Activated naive CD4-positive, alpha-beta T cell treated with anti-CD3 and anti-CD28 coated beads for 36 hours (primary cell): ENCODE measurements at regions of chr16 and their contacts with region 1.

Region 1: DNA sequence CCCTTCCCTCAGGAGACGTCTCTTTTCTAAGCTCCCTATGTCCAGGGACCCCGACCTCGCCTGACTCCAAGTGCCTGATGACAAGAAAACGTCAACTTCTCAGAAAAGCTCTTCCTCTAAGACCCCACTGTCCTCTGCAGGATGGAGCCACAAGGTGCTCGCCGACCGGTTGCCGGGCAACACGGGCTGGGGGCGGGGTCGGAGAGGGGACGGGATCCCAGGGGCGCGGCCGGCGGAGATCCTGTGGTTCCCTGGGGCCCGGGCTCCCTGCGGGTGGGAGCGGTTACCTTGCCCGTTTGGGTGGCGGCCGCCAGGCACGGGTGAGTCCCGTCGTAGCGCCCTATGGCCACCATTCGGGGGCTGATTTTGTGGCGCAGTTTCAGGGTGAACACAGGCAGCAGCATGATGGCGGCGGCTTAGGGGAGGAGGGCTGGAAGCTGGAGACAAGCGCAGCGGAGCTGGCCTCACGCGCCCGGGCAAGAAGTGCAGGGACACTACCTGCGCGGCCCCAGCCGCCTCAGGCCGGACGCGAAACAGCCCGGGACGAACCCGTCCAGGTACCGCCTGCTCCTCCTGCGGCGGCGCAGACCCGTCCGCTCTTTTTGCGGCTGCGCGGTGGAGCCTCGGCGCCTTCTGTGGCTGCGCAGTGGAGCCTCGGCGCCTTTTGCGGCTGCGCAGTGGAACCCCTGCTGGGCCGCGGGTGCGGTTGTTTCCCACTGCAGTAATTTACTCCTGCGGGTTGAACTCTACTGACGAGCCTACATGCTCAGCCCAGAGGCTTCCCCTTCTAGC is at the start of gene BBS2:
- DNase-seq: peak; percentile 93
- H3K4me3 Mint-ChIP-seq: peak within 1 kb of the TSS; percentile 81
- H3K27ac Mint-ChIP-seq: peak within 1 kb of the TSS; percentile 84
- H3K4me1 Mint-ChIP-seq: peaks cover 39% of the 10 kb centered on the region
- H3K27me3 Mint-ChIP-seq: no peaks in the 10 kb centered on the region
- total RNA-seq, gene BBS2: 18.0 to 19.2 TPM

Region 2: GRCh38 chr16:56356276-56357240 is 163.1 kb before region 1 on chr16:
- CTCF ChIA-PET with region 1: no interaction called
- intact Hi-C with region 1: loop called (anchors 1 kb)
- DNase-seq: peak; percentile 68
- H3K4me3 Mint-ChIP-seq: peak overlapping the region; percentile 74
- H3K27ac Mint-ChIP-seq: peak overlapping the region; percentile 86
- H3K4me1 Mint-ChIP-seq: peaks cover 31% of the 10 kb centered on the region
- H3K27me3 Mint-ChIP-seq: no peaks in the 10 kb centered on the region

Region 3: DNA sequence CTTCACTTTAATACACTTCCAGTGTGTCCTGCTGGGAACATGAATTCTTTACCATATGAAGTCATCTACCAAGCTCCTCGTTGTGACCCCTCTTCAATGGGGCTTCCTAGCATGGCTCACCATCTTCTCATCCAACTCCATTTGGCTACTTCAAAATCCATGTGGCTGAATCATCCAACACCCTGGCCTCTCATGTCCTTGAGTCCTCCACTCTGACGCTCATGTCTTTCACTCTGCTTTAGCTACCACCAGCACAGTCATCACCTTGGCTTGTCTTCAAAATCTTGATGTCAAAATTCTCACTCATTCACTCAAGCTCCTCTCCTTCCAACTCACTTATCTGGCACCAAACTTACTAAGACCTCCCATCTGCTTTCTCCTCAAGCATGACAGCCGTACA is 130.1 kb before region 1 on chr16:
- CTCF ChIA-PET with region 1: no interaction called
- intact Hi-C with region 1: no loop called
- DNase-seq: no peak
- H3K4me3 Mint-ChIP-seq: no peak overlapping the region
- H3K27ac Mint-ChIP-seq: no peak overlapping the region
- H3K4me1 Mint-ChIP-seq: no peaks in the 10 kb centered on the region
- H3K27me3 Mint-ChIP-seq: no peaks in the 10 kb centered on the region

Region 4: GRCh38 chr16:56729735-56730662 is 210.3 kb after region 1 on chr16 and contains the start of gene NUP93:
- CTCF ChIA-PET with region 1: no interaction called
- intact Hi-C with region 1: loop called (anchors 1 kb)
- DNase-seq: peak; percentile 94
- H3K4me3 Mint-ChIP-seq: no peak within 1 kb of the TSS
- H3K27ac Mint-ChIP-seq: peak within 1 kb of the TSS; percentile 78
- H3K4me1 Mint-ChIP-seq: peaks cover 14% of the 10 kb centered on the region
- H3K27me3 Mint-ChIP-seq: no peaks in the 10 kb centered on the region
- total RNA-seq, gene NUP93: 161 to 172 TPM